Activated B cell treated with CpG ODN at 0.5 μM for 24 hours (primary cell): ENCODE measurements at regions of chr6 and their contacts with region 1.

Region 1: GRCh38 chr6:156776840-156777576 is at the start of gene ARID1B:
- DNase-seq: peak; percentile 80
- ATAC-seq: peak; percentile 68
- H3K4me3 Mint-ChIP-seq: peak within 1 kb of the TSS; percentile 93
- H3K27ac Mint-ChIP-seq: peak within 1 kb of the TSS; percentile 97
- H3K4me1 Mint-ChIP-seq: peaks cover 53% of the 10 kb centered on the region
- H3K27me3 Mint-ChIP-seq: no peaks in the 10 kb centered on the region
- CTCF ChIP-seq: no peak
- total RNA-seq, gene ARID1B: 194 and 248 TPM in 2 replicates

Region 2: GRCh38 chr6:155327326-155328073 is 1449.5 kb before region 1 on chr6:
- CTCF ChIA-PET with region 1: no interaction called
- POLR2A ChIA-PET with region 1: no interaction called
- intact Hi-C with region 1: loop called (anchors 5 kb)
- DNase-seq: no peak
- ATAC-seq: peak; percentile 62
- H3K4me3 Mint-ChIP-seq: no peak overlapping the region
- H3K27ac Mint-ChIP-seq: no peak overlapping the region
- H3K4me1 Mint-ChIP-seq: peaks cover 3% of the 10 kb centered on the region
- H3K27me3 Mint-ChIP-seq: no peaks in the 10 kb centered on the region
- CTCF ChIP-seq: peak; percentile 91

Region 3: GRCh38 chr6:156485150-156485549 is 291.9 kb before region 1 on chr6:
- CTCF ChIA-PET with region 1: no interaction called
- POLR2A ChIA-PET with region 1: no interaction called
- intact Hi-C with region 1: no loop called
- DNase-seq: no peak
- ATAC-seq: no peak
- H3K4me3 Mint-ChIP-seq: no peak overlapping the region
- H3K27ac Mint-ChIP-seq: no peak overlapping the region
- H3K4me1 Mint-ChIP-seq: no peaks in the 10 kb centered on the region
- H3K27me3 Mint-ChIP-seq: no peaks in the 10 kb centered on the region
- CTCF ChIP-seq: no peak

Region 4: GRCh38 chr6:156634951-156635371 is 142.0 kb before region 1 on chr6:
- CTCF ChIA-PET with region 1: interaction called, 5 read pairs
- POLR2A ChIA-PET with region 1: interaction called, 34 read pairs
- intact Hi-C with region 1: loop called (anchors 1 kb)
- DNase-seq: no peak
- ATAC-seq: no peak
- H3K4me3 Mint-ChIP-seq: peak overlapping the region; percentile 79
- H3K27ac Mint-ChIP-seq: peak overlapping the region; percentile 95
- H3K4me1 Mint-ChIP-seq: peaks cover 54% of the 10 kb centered on the region
- H3K27me3 Mint-ChIP-seq: no peaks in the 10 kb centered on the region
- CTCF ChIP-seq: no peak

Region 5: DNA sequence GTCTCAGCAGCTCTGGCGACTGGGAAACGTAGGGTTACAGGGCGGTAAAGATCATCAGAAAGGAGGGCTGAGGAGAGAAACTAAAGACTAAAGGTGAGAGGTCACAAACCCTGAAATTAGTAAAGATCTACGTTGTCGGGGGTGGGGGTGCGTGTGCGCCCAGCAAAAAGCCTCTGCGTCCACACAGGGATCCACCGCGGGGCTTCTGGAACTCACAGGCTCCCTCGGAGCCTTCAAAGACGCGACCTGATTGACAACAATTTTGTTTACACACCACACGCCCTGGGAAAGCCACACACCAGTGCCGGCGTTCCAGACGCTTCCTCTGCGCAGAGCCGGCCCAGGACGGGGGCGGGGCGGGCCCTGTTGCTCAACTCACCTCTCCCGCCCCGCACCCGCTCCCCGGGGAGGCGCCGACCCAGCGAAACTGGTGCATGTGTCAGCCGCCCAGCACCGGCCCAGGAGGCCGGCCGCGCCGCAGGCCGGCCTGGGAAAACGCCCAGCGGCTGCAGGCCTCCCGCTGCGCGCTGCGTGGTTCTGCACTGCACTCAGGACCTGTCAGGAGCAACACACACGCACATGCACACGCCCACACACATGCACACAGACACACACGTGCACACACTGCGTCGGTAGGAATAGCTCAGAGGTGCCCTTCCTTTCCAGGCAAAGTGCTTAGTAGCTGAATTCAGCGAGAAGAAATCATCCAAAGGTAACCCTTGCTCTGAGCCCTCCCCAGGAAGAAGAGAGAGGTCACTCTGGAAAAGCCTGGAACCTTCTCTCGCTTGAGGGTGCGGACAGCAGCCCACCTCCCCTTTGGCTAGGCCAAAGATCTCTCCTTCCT is 57.1 kb before region 1 on chr6:
- CTCF ChIA-PET with region 1: no interaction called
- POLR2A ChIA-PET with region 1: interaction called, 49 read pairs
- intact Hi-C with region 1: loop called (anchors 1 kb)
- DNase-seq: peak; percentile 78
- ATAC-seq: peak; percentile 81
- H3K4me3 Mint-ChIP-seq: peak overlapping the region; percentile 82
- H3K27ac Mint-ChIP-seq: peak overlapping the region; percentile 95
- H3K4me1 Mint-ChIP-seq: peaks cover 52% of the 10 kb centered on the region
- H3K27me3 Mint-ChIP-seq: no peaks in the 10 kb centered on the region
- CTCF ChIP-seq: no peak

Region 6: GRCh38 chr6:156760377-156760776 is 16.6 kb before region 1 on chr6:
- CTCF ChIA-PET with region 1: no interaction called
- POLR2A ChIA-PET with region 1: interaction called, 11 read pairs
- intact Hi-C with region 1: loop called (anchors 2 kb)
- DNase-seq: no peak
- ATAC-seq: no peak
- H3K4me3 Mint-ChIP-seq: no peak overlapping the region
- H3K27ac Mint-ChIP-seq: no peak overlapping the region
- H3K4me1 Mint-ChIP-seq: peaks cover 20% of the 10 kb centered on the region
- H3K27me3 Mint-ChIP-seq: no peaks in the 10 kb centered on the region
- CTCF ChIP-seq: no peak

Region 7: GRCh38 chr6:157184202-157185020 is 407.4 kb after region 1 on chr6:
- CTCF ChIA-PET with region 1: no interaction called
- POLR2A ChIA-PET with region 1: no interaction called
- intact Hi-C with region 1: loop called (anchors 10 kb)
- DNase-seq: peak; percentile 30
- ATAC-seq: peak; percentile 75
- H3K4me3 Mint-ChIP-seq: no peak overlapping the region
- H3K27ac Mint-ChIP-seq: no peak overlapping the region
- H3K4me1 Mint-ChIP-seq: peaks cover 3% of the 10 kb centered on the region
- H3K27me3 Mint-ChIP-seq: no peaks in the 10 kb centered on the region
- CTCF ChIP-seq: no peak